Breast epithelium (tissue), 4 donors: ENCODE measurements at regions of chr9 and their contacts with region 1.

Region 1: GRCh38 chr9:106324591-106325280 is 538.2 kb upstream of the ZNF462 start:
- DNase-seq: no peak
- H3K4me3 ChIP-seq: no peak overlapping the region
- H3K27ac ChIP-seq: no peak overlapping the region
- H3K4me1 ChIP-seq: no peaks in the 10 kb centered on the region
- H3K27me3 ChIP-seq: no peaks in the 10 kb centered on the region
- CTCF ChIP-seq: no peak
- POLR2A ChIP-seq: no peak

Region 2: DNA sequence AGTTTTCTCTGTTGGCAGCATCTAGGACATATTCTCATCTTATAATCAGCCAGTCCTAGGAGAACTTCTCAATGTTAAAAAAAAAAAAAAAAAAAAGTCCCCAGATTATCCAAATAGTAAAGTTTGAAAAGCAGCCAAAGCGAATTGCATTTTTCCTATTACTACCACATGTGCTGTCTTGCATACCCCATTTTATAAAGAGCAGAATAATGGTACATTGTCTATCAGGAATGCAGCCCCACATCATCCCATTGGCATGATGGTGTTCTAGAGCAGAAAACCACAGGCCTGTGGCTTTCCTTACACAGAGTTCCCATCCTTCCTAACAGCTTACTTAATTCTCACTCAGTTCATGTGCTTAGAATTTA is 248.8 kb before region 1 on chr9:
- intact Hi-C with region 1: loop called (anchors 10 kb)
- DNase-seq: peak in 1 of 2 donors; percentile 74
- H3K4me3 ChIP-seq: no peak overlapping the region
- H3K27ac ChIP-seq: peak overlapping the region; percentile 66 to 72
- H3K4me1 ChIP-seq: peaks cover 0 to 24% of the 10 kb centered on the region in 2 donors
- H3K27me3 ChIP-seq: no peaks in the 10 kb centered on the region
- CTCF ChIP-seq: no peak
- POLR2A ChIP-seq: no peak

Region 3: GRCh38 chr9:106350777-106351176 is 26.0 kb after region 1 on chr9:
- intact Hi-C with region 1: no loop called
- DNase-seq: no peak
- H3K4me3 ChIP-seq: no peak overlapping the region
- H3K27ac ChIP-seq: no peak overlapping the region
- H3K4me1 ChIP-seq: no peaks in the 10 kb centered on the region
- H3K27me3 ChIP-seq: no peaks in the 10 kb centered on the region
- CTCF ChIP-seq: no peak
- POLR2A ChIP-seq: no peak